Naive thymus-derived CD4-positive, alpha-beta T cell (primary cell): ENCODE measurements at regions of chr3 and their contacts with region 1.

Region 1: DNA sequence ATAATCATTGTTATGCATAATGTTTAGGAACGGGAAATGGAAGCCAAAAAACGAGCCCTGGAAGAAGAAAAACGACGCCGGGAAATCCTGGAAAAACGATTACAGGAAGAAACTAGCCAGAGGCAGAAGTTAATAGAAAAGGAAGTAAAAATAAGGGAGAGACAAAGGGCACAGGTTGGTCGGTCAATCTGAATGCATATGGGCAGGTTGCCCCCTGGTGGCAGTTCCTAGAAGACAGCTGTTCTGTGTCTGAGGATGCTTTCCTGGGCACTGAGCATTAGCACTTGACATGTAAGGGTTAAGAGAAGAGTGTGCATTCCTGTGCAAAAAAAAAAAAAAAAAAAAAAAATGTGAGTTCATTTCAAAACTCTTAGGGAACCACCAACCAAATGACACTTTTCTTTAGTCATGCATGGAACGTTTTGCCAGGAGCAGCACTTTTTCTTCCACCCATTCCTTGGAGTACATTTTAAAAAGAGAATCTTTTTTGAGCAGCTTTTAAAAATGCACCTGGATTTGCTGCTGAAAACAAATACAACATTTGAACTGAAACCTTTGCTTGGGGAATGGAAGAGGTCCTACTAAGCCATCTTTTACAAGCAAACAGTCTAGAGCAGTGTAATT is 11.1 kb upstream of the ABHD10 start:
- DNase-seq: peak; percentile 44 to 72 (median 64)
- ATAC-seq: peak; percentile 96
- H3K4me3 ChIP-seq: no peak overlapping the region
- H3K4me3 Mint-ChIP-seq: peak overlapping the region in 2 of 10 donors; percentile 12 to 44
- H3K27ac ChIP-seq: no peak overlapping the region
- H3K27ac Mint-ChIP-seq: peak overlapping the region in 1 of 9 donors; percentile 71
- H3K4me1 ChIP-seq: peaks cover 0 to 4% of the 10 kb centered on the region in 2 donors
- H3K4me1 Mint-ChIP-seq: peaks cover 3 to 13% (median 5%) of the 10 kb centered on the region in 7 donors
- H3K27me3 ChIP-seq: no peaks in the 10 kb centered on the region
- H3K27me3 Mint-ChIP-seq: no peaks in the 10 kb centered on the region

Region 2: GRCh38 chr3:111688190-111688800 is 279.5 kb before region 1 on chr3:
- CTCF ChIA-PET with region 1: no interaction called
- POLR2A ChIA-PET with region 1: no interaction called
- intact Hi-C with region 1: no loop called
- DNase-seq: no peak
- ATAC-seq: no peak
- H3K4me3 ChIP-seq: no peak overlapping the region
- H3K4me3 Mint-ChIP-seq: no peak overlapping the region
- H3K27ac ChIP-seq: no peak overlapping the region
- H3K27ac Mint-ChIP-seq: peak overlapping the region in 4 of 9 donors; percentile 14 to 80 (median 50)
- H3K4me1 ChIP-seq: peaks cover 5% of the 10 kb centered on the region in 2 donors
- H3K4me1 Mint-ChIP-seq: peaks cover 11 to 69% (median 52%) of the 10 kb centered on the region in 7 donors
- H3K27me3 ChIP-seq: no peaks in the 10 kb centered on the region
- H3K27me3 Mint-ChIP-seq: no peaks in the 10 kb centered on the region

Region 3: DNA sequence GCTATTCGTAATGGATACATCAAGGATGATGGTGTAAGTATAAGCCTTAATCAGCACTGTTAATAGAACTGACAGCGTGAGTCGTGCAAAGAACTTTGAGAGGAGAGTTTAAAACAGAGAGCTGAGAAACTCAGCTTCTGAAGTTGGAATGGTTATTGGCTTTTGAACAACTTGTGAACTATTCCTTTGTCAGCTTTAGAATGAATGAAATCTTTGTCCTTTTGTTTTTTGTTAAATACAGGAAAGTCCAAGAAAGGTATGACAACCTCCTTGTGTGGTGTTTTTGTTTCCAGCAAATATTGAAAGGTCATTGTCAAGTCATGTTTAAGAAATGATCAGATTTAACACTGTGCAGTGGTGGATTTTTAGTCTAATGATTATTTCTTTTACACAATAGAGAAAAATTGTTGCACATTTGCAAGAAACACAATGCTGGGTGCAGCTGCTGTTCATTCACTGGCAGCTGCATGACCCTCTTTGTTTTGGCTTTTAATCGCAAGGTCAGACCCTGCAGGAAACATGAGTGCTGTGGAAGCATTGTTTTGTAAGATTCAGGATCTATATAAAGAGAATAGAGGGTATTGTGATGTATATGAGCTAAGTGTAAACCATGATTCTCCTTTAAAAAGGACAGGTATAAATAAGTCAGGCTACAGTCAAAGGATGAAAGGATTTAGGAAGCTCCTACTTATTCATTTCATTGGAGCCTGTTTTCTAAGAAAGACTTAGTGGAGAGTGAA is 10.6 kb before region 1 on chr3:
- CTCF ChIA-PET with region 1: interaction called, 10 read pairs
- POLR2A ChIA-PET with region 1: no interaction called
- intact Hi-C with region 1: no loop called
- DNase-seq: no peak
- ATAC-seq: no peak
- H3K4me3 ChIP-seq: no peak overlapping the region
- H3K4me3 Mint-ChIP-seq: no peak overlapping the region
- H3K27ac ChIP-seq: no peak overlapping the region
- H3K27ac Mint-ChIP-seq: no peak overlapping the region
- H3K4me1 ChIP-seq: no peaks in the 10 kb centered on the region
- H3K4me1 Mint-ChIP-seq: no peaks in the 10 kb centered on the region
- H3K27me3 ChIP-seq: no peaks in the 10 kb centered on the region
- H3K27me3 Mint-ChIP-seq: peaks cover 0 to 3% (median 0%) of the 10 kb centered on the region in 5 donors